HepG2 (cell line): ENCODE measurements at regions of chr5 and their contacts with region 1.

Region 1: GRCh38 chr5:179265514-179266290 is 79.6 kb downstream of the ADAMTS2 start:
- DNase-seq: no peak
- ATAC-seq: peak; percentile 70
- H3K4me3 ChIP-seq: peak overlapping the region; percentile 14 to 66 (median 36); a peak in 5 of 6 replicates
- H3K27ac ChIP-seq: peak overlapping the region; percentile 78
- H3K4me1 ChIP-seq: peaks cover 72% of the 10 kb centered on the region
- H3K27me3 ChIP-seq: no peaks in the 10 kb centered on the region; a peak in 1 of 5 replicates
- CTCF ChIP-seq: no peak
- EP300 ChIP-seq: no peak
- POLR2A ChIP-seq: no peak
- RAD21 ChIP-seq: no peak

Region 2: DNA sequence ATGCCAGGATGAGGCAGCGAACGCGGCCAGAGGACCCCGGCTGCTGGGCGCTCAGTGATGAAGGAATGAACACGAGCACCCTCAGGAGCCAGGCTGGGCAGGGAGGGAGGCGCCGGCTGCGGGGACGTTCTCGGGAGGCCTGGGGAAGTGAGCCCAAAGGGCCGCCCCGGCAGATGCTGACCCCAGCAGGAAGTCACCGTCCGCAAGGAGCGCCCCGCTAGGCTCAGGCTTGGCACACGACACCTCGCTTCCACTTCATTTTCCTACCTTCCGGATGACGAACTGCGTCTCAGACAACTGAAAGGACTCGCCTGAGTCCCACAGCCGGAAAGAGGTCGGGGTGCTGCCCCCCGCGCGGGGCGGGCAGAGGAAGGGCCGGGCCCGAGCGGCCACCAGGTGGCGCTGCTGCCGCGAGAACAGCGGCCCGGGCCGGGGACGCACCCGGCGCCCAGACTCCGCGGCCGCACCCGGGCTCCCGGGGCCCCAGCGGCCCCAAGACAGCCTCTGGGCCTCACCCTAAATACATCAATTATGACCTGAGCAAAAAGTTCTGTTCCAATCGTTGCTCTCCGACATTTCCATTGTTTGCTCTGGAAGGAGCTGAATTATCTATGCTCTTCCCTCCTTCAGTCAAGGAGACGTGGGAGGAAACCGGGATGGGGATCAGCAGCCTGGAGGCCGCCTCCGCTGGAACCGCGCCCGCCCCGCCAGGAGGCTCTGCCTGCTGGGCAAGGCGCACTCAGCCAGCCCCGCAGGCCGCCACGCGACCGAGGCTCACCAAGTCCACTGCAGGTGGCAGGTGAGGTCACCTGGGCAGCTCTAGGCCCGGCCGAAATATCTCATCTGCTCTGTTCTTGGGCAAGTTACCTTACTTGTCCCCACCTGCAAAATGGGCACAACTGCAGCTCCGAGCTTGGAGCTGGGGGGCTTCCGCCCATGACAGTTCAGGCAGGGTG is 98.5 kb before region 1 on chr5:
- CTCF ChIA-PET with region 1: interaction called, 28 read pairs
- POLR2A ChIA-PET with region 1: no interaction called
- in situ Hi-C with region 1: loop called (anchors 5 kb)
- intact Hi-C with region 1: loop called (anchors 10 kb)
- DNase-seq: no peak
- ATAC-seq: peak; percentile 80
- H3K4me3 ChIP-seq: peak overlapping the region in 1 of 3 experiments; percentile 50; a peak in 1 of 6 replicates
- H3K27ac ChIP-seq: no peak overlapping the region
- H3K4me1 ChIP-seq: no peaks in the 10 kb centered on the region
- H3K27me3 ChIP-seq: peaks cover 3 to 12% of the 10 kb centered on the region in 2 experiments; a peak in 3 of 5 replicates
- CTCF ChIP-seq: peak; percentile 76
- EP300 ChIP-seq: no peak
- POLR2A ChIP-seq: no peak
- RAD21 ChIP-seq: peak; percentile 97